ENCODE measurements at regions of chr9 and their contacts with region 1.

Region 1: GRCh38 chr9:70484210-70485130 is 70.0 kb upstream of the KLF9 start:
- DNase-seq: no peak
- ATAC-seq: peak; percentile 83
- H3K4me3 ChIP-seq: no peak overlapping the region
- H3K27ac ChIP-seq: no peak overlapping the region
- H3K4me1 ChIP-seq: peaks cover 6 to 18% of the 10 kb centered on the region in 2 donors
- H3K27me3 ChIP-seq: no peaks in the 10 kb centered on the region

Region 2: DNA sequence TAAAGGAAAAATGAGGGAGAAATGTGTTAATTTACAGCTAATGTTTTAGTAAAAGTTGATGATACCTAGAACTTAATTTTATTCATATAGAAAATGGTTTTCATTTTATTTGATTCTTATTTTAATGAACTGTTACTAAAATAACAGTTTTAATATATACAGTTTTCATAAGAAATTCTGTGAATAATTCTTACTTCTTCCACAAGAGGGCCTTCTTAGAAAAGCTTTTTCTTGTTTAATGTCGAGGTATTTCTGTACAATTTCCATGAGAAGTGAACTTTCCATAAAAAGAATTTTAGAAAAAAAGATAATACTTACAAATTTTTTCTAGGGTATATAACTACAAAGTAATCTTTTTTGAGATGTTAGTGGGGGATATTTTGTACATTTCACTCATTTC is 143.9 kb before region 1 on chr9:
- intact Hi-C with region 1: loop called in 1 of 2 experiments (anchors 5 kb)
- DNase-seq: no peak
- ATAC-seq: no peak
- H3K4me3 ChIP-seq: no peak overlapping the region
- H3K27ac ChIP-seq: no peak overlapping the region
- H3K4me1 ChIP-seq: no peaks in the 10 kb centered on the region
- H3K27me3 ChIP-seq: no peaks in the 10 kb centered on the region

Region 3: GRCh38 chr9:70352802-70353201 is 131.7 kb before region 1 on chr9:
- intact Hi-C with region 1: loop called in 1 of 2 experiments (anchors 5 kb)
- DNase-seq: no peak
- ATAC-seq: no peak
- H3K4me3 ChIP-seq: no peak overlapping the region
- H3K27ac ChIP-seq: no peak overlapping the region
- H3K4me1 ChIP-seq: no peaks in the 10 kb centered on the region
- H3K27me3 ChIP-seq: no peaks in the 10 kb centered on the region

Region 4: GRCh38 chr9:70419546-70420266 is 64.8 kb before region 1 on chr9:
- intact Hi-C with region 1: loop called (anchors 2 kb)
- DNase-seq: peak; percentile 96 to 98
- ATAC-seq: peak; percentile 86
- H3K4me3 ChIP-seq: peak overlapping the region; percentile 30 to 39
- H3K27ac ChIP-seq: peak overlapping the region; percentile 79 to 95
- H3K4me1 ChIP-seq: no peaks in the 10 kb centered on the region
- H3K27me3 ChIP-seq: no peaks in the 10 kb centered on the region

Region 5: GRCh38 chr9:70438341-70438928 is 46.0 kb before region 1 on chr9:
- intact Hi-C with region 1: loop called (anchors 5 kb)
- DNase-seq: peak in 1 of 2 donors; percentile 71
- ATAC-seq: peak; percentile 48
- H3K4me3 ChIP-seq: no peak overlapping the region
- H3K27ac ChIP-seq: no peak overlapping the region
- H3K4me1 ChIP-seq: peaks cover 0 to 6% of the 10 kb centered on the region in 2 donors
- H3K27me3 ChIP-seq: no peaks in the 10 kb centered on the region